Mammary epithelial cell (primary cell): ENCODE measurements at regions of chr19 and their contacts with region 1.

Region 1: GRCh38 chr19:49746206-49747091 is 16.7 kb downstream of the TSKS start:
- DNase-seq: no peak
- H3K4me3 ChIP-seq: no peak overlapping the region
- H3K27ac ChIP-seq: no peak overlapping the region
- H3K4me1 ChIP-seq: no peaks in the 10 kb centered on the region
- H3K27me3 ChIP-seq: no peaks in the 10 kb centered on the region
- CTCF ChIP-seq: no peak

Region 2: GRCh38 chr19:49653211-49653759 is 93.2 kb before region 1 on chr19:
- CTCF ChIA-PET with region 1: no interaction called
- dilution Hi-C with region 1: no loop called
- in situ Hi-C with region 1: no loop called
- intact Hi-C with region 1: no loop called
- DNase-seq: no peak
- H3K4me3 ChIP-seq: no peak overlapping the region
- H3K27ac ChIP-seq: no peak overlapping the region
- H3K4me1 ChIP-seq: no peaks in the 10 kb centered on the region
- H3K27me3 ChIP-seq: no peaks in the 10 kb centered on the region
- CTCF ChIP-seq: no peak

Region 3: DNA sequence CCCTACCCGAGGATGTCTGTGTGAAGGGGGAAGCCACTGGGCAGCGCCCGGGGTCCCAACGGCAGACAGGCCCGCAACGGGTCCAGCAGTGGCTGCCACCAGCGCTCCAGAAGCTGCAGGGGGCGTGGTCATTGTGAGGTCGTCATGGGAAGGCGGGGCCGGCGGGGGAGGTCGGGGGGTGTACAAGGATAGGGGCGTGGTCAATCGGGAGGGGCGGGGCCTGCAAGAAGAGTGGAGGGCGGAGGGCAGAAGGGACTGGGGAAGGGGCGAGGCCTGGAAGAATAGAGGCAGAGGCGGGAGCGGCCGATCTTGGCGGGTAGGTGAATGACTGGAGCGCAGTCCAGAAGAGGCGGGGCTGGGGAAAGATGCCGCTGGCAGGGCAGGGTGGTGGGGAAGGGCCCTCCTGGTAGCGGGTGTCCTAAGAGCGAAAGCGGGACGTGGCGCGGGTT is 62.3 kb after region 1 on chr19:
- CTCF ChIA-PET with region 1: no interaction called
- dilution Hi-C with region 1: no loop called
- in situ Hi-C with region 1: no loop called
- intact Hi-C with region 1: loop called (anchors 2 kb)
- DNase-seq: peak; percentile 44
- H3K4me3 ChIP-seq: peak overlapping the region; percentile 22 to 55 (median 52)
- H3K27ac ChIP-seq: no peak overlapping the region
- H3K4me1 ChIP-seq: peaks cover 10% of the 10 kb centered on the region
- H3K27me3 ChIP-seq: no peaks in the 10 kb centered on the region
- CTCF ChIP-seq: no peak

Region 4: GRCh38 chr19:49850473-49851342 is 104.3 kb after region 1 on chr19 and contains the start of gene PTOV1:
- CTCF ChIA-PET with region 1: no interaction called
- dilution Hi-C with region 1: no loop called
- in situ Hi-C with region 1: no loop called
- intact Hi-C with region 1: loop called (anchors 5 kb)
- DNase-seq: peak; percentile 81
- H3K4me3 ChIP-seq: peak within 1 kb of the TSS; percentile 76 to 95 (median 95)
- H3K27ac ChIP-seq: peak within 1 kb of the TSS; percentile 79
- H3K4me1 ChIP-seq: peaks cover 42% of the 10 kb centered on the region
- H3K27me3 ChIP-seq: no peaks in the 10 kb centered on the region
- CTCF ChIP-seq: no peak
- total RNA-seq, gene PTOV1: 28.8 to 85.6 TPM

Region 5: GRCh38 chr19:49877020-49877878 is 130.8 kb after region 1 on chr19 and contains the starts of genes AKT1S1 and TBC1D17:
- CTCF ChIA-PET with region 1: no interaction called
- dilution Hi-C with region 1: no loop called
- in situ Hi-C with region 1: no loop called
- intact Hi-C with region 1: loop called (anchors 5 kb)
- DNase-seq: peak; percentile 100
- H3K4me3 ChIP-seq: peak within 1 kb of the TSS; percentile 86 to 98 (median 92)
- H3K27ac ChIP-seq: peak within 1 kb of the TSS; percentile 98
- H3K4me1 ChIP-seq: peaks cover 24% of the 10 kb centered on the region
- H3K27me3 ChIP-seq: no peaks in the 10 kb centered on the region
- CTCF ChIP-seq: no peak
- total RNA-seq, gene AKT1S1: 12.3 to 68.3 TPM
- total RNA-seq, gene TBC1D17: 13.0 to 32.0 TPM

Region 6: DNA sequence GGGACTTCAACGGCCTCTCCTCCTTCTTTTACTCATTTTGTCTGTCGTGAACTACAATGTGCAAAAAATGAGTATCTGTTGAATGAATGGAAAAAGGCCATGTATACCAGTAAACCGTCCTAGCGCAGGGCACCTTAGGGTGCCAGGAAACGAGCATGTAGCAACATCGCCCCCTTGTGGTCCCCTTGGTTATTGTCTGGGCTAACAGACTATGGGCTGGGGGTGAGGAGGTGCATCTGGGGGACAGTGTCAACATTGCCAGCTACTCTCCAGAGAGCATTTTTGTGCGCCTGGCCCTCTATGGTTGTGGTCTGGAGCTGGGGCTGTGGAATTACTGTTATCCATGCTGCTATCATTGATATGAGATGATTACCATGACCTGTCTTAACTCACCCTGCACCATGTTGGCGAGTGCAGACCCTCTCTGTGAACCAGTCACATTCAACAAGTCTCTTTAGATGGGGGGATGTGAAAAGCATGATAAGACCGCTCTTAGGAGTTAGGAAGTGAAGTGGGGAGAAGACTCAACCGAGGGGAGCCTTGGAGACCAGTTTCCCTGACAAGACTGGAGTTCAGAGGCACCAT is 237.3 kb after region 1 on chr19:
- CTCF ChIA-PET with region 1: no interaction called
- dilution Hi-C with region 1: no loop called
- in situ Hi-C with region 1: no loop called
- intact Hi-C with region 1: loop called (anchors 5 kb)
- DNase-seq: peak; percentile 20
- H3K4me3 ChIP-seq: no peak overlapping the region
- H3K27ac ChIP-seq: no peak overlapping the region
- H3K4me1 ChIP-seq: no peaks in the 10 kb centered on the region
- H3K27me3 ChIP-seq: no peaks in the 10 kb centered on the region
- CTCF ChIP-seq: peak; percentile 80 to 81

Region 7: DNA sequence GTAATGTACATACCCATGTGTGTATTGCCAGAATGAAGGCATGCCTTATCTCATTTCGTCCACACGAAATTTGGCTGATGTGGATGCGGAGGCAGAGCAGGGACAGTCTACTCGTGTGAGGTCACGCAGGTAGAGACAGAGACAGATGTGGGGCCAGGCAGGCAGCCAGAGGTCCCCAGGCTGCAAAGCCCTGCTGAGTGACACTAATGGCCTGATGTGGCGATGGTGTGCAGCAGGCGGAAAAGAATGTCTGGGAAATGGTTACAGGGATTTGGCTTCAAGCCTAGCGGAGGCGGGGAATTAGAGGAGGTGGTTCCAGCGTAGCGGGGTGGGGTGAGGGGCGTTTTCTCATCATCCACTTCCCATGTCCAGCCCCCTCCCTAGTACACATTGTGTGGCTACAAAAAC is 420.9 kb after region 1 on chr19:
- CTCF ChIA-PET with region 1: no interaction called
- dilution Hi-C with region 1: no loop called
- in situ Hi-C with region 1: no loop called
- intact Hi-C with region 1: no loop called
- DNase-seq: no peak
- H3K4me3 ChIP-seq: no peak overlapping the region
- H3K27ac ChIP-seq: no peak overlapping the region
- H3K4me1 ChIP-seq: no peaks in the 10 kb centered on the region
- H3K27me3 ChIP-seq: no peaks in the 10 kb centered on the region
- CTCF ChIP-seq: no peak